Mucosa of descending colon (tissue), 3 donors: ENCODE measurements at regions of chr17 and their contacts with region 1.

Region 1: GRCh38 chr17:57747221-57748017 is 2.3 kb upstream of the CCDC182 start:
- DNase-seq: peak in 1 of 3 donors; percentile 53
- ATAC-seq: peak; percentile 67
- H3K4me3 ChIP-seq: no peak overlapping the region
- H3K4me1 ChIP-seq: no peaks in the 10 kb centered on the region
- CTCF ChIP-seq: peak; percentile 37

Region 2: GRCh38 chr17:57130761-57131461 is 616.5 kb before region 1 on chr17:
- intact Hi-C with region 1: loop called (anchors 5 to 10 kb)
- DNase-seq: peak; percentile 63 to 96 (median 82)
- ATAC-seq: peak; percentile 96
- H3K4me3 ChIP-seq: no peak overlapping the region
- H3K4me1 ChIP-seq: peaks cover 3% of the 10 kb centered on the region
- CTCF ChIP-seq: peak; percentile 70

Region 3: DNA sequence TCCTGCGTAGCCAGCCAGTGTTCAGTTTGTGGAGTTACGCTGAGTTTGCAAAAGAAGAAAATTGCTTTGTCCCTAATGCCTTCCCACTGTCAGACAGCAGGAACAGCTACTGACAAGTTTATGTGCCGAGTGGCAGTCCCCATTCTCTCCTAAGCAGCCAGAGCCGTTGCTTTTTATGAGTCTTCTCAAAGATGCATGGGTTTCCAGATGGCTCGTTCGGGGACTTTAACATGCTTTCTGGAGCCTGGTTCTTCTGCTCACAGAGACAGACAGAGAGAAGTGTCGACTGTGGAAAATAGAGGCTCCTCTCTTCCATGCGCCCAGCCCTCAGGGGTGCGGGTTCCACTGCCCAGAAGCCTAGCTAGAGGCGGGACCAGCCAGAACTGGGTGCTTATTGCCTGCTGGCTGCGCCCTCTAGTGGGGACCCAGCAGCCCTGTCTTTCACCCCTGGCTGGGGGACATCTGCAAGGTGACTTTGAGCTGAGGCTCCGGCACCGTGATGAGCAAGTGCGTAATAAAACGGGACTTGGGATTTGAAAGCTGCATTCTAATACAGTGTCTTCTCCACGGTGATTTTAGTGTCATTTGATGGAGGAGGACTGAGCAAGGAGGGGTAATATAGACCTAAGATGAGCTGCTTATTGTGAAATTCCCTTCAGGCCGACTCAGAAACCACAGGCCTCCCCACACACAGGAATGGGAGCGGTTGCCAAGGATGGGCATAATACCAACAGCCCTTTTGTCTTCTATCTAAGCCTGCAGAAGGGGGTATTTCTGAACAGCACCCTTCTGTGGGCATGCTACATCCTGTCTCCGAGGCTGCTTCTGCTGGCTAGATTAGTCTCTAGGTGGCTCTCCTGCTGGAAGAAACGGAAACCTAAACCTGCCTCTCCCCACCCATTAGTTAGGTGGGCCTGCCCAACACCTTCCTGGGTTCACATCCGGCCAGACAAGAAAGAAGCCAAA is 75.5 kb before region 1 on chr17:
- intact Hi-C with region 1: loop called in 1 of 2 experiments (anchors 10 kb)
- DNase-seq: peak; percentile 70 to 72 (median 71)
- ATAC-seq: peak; percentile 85
- H3K4me3 ChIP-seq: no peak overlapping the region
- H3K4me1 ChIP-seq: no peaks in the 10 kb centered on the region
- CTCF ChIP-seq: peak; percentile 80

Region 4: GRCh38 chr17:57803025-57803424 is 55.6 kb after region 1 on chr17:
- intact Hi-C with region 1: no loop called
- DNase-seq: no peak
- ATAC-seq: no peak
- H3K4me3 ChIP-seq: no peak overlapping the region
- H3K4me1 ChIP-seq: no peaks in the 10 kb centered on the region
- CTCF ChIP-seq: no peak